ENCODE measurements at regions of chr11 and their contacts with region 1.

Region 1: GRCh38 chr11:118791111-118791965 is at the start of gene DDX6:
- DNase-seq: peak; percentile 83 to 95 (median 90)
- ATAC-seq: peak; percentile 65 to 71
- H3K4me3 Mint-ChIP-seq: peak within 1 kb of the TSS; percentile 98 to 100 (median 100)
- H3K27ac Mint-ChIP-seq: peak within 1 kb of the TSS; percentile 96 to 100 (median 100)
- H3K4me1 Mint-ChIP-seq: peaks cover 15 to 50% (median 25%) of the 10 kb centered on the region in 4 donors
- H3K27me3 Mint-ChIP-seq: no peaks in the 10 kb centered on the region
- polyA plus RNA-seq, gene DDX6: 82.7 to 107 (median 106) TPM

Region 2: DNA sequence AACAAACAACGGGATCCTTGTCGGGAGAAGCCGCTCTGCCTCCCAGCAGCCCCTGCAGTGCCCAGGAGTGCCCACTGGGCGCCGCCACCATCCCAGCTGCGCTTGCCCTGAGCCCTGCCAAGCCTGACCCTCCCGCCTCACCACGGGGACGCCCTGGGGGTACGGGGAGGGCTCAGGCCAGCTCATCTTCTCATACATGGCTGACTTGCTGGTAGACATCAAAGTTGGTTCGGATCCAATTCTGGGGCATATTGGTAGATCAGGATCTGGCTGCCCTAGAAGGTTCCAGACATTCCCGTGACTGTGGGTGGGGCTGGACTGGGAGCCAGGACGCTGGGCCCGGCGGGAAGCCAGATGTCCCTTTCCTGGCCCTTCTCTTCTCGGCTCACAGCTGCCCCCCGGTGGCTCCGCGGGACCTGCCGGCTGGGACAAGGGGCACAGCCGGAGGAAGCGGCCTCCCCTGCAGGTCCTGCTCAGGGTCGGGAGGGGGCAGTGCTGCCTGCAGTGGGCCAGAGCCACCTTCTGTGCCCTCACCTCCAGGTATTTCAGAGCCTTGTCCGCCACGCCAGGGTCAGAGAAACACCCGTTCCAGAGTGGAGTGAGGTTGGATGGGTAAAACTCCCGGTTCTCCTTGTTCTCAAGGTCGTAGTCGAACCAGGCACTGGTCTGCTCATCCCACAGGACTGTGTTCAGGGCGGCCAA is 101.3 kb before region 1 on chr11:
- POLR2A ChIA-PET with region 1: interaction called, 277 read pairs
- DNase-seq: peak; percentile 71 to 91 (median 81)
- ATAC-seq: peak; percentile 87 to 94
- H3K4me3 Mint-ChIP-seq: peak overlapping the region; percentile 50 to 82 (median 76)
- H3K27ac Mint-ChIP-seq: peak overlapping the region; percentile 22 to 97 (median 77)
- H3K4me1 Mint-ChIP-seq: peaks cover 29 to 70% (median 51%) of the 10 kb centered on the region in 4 donors
- H3K27me3 Mint-ChIP-seq: no peaks in the 10 kb centered on the region

Region 3: GRCh38 chr11:118766035-118766434 is 25.3 kb before region 1 on chr11:
- POLR2A ChIA-PET with region 1: interaction called, 19 read pairs
- DNase-seq: no peak
- ATAC-seq: no peak
- H3K4me3 Mint-ChIP-seq: no peak overlapping the region
- H3K27ac Mint-ChIP-seq: peak overlapping the region in 4 of 10 donors; percentile 3 to 63 (median 46)
- H3K4me1 Mint-ChIP-seq: peaks cover 15 to 62% (median 50%) of the 10 kb centered on the region in 4 donors
- H3K27me3 Mint-ChIP-seq: no peaks in the 10 kb centered on the region

Region 4: GRCh38 chr11:118807800-118808778 is 16.8 kb after region 1 on chr11:
- POLR2A ChIA-PET with region 1: interaction called, 55 read pairs
- DNase-seq: peak in 1 of 10 donors; percentile 23
- ATAC-seq: peak; percentile 56 to 72
- H3K4me3 Mint-ChIP-seq: peak overlapping the region in 9 of 10 donors; percentile 24 to 67 (median 48)
- H3K27ac Mint-ChIP-seq: peak overlapping the region in 9 of 10 donors; percentile 19 to 92 (median 76)
- H3K4me1 Mint-ChIP-seq: peaks cover 12 to 47% (median 20%) of the 10 kb centered on the region in 4 donors
- H3K27me3 Mint-ChIP-seq: no peaks in the 10 kb centered on the region

Region 5: DNA sequence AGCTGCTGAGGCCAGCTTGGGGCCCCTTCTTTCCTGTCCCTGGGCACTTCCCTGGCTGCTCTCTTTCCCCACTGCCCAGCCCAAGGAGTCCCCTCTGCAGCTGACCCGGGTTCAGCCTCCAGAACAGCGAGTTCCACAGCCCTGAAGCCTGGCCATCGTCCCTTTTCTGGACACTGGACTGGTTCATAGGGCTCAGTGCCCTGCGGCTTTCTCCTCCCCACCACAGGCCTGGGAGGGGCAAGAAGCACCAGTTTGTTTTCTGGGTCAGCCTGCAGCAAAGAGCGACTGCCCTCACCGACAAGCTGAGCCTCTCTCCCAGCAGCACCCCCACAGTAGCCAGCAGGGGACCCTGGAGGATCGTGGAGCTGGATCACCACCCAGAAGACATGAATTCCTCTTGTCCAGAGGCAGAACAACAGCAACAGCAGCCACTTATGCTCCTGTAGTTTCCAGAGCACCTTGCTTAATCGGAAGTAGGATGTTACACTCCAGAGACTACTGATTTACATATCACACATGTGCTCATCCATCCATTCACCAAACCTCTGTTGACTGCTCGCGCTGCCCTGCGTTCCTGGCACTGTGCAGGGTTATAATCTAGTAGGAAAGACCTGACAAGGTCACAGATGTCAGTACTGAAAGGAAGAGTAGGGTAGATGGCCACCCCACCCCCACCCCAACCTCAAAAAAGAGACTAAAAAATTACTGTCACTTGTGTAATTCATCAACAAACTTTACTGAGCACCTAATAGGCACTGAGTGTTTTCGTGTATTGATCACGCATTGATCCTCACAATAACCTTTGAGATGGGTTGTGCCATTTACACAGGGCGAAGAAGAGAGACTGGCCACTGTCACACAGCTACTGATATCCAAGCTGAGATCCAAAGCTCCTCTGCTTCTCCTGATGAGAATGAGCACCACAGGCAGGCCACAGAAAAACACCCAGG is 79.3 kb after region 1 on chr11:
- POLR2A ChIA-PET with region 1: interaction called, 503 read pairs
- DNase-seq: peak in 3 of 10 donors; percentile 14 to 20 (median 17)
- ATAC-seq: peak; percentile 37 to 39
- H3K4me3 Mint-ChIP-seq: peak overlapping the region; percentile 73 to 90 (median 84)
- H3K27ac Mint-ChIP-seq: peak overlapping the region; percentile 97 to 100 (median 99)
- H3K4me1 Mint-ChIP-seq: peaks cover 33 to 66% (median 57%) of the 10 kb centered on the region in 4 donors
- H3K27me3 Mint-ChIP-seq: no peaks in the 10 kb centered on the region

Region 6: DNA sequence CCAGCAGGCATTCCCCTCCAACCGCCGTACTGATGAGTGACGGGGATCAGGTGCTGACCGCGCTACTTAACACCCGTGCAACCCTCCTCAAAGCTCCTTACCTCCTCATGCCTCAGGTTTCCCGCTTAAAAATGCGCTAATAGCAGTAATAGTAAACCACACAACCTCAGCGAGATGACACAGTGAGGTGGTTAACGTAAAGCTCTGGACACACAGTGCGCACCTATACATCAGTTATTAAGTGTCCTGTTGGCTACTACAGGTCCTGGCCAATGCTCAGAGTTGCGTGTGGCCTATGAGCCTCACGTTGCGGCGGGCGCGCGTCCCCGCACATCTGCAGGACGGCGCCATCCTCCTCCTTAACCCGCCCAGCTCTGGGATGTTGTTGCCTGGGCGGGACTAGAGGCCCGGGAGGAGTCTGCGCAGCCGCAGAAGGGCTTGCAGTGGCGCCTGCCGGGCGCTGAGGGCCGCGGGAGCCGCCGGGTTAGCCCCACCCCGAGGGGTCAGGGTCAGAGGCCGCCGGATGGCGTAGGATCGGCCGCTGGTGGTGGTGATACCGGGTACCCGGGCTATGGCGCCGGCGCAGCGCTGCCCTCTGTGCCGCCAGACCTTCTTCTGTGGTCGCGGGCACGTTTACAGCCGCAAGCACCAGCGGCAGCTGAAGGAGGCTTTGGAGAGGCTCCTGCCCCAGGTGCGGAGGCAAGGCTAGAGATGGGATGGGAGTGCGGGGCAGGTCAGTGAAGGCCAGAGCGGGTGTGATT is 206.5 kb after region 1 on chr11 and contains the start of gene CENATAC:
- POLR2A ChIA-PET with region 1: interaction called, 12 read pairs
- DNase-seq: peak; percentile 90 to 96 (median 94)
- ATAC-seq: peak; percentile 93
- H3K4me3 Mint-ChIP-seq: peak within 1 kb of the TSS; percentile 88 to 99 (median 98)
- H3K27ac Mint-ChIP-seq: peak within 1 kb of the TSS; percentile 89 to 99 (median 97)
- H3K4me1 Mint-ChIP-seq: peaks cover 13 to 48% (median 45%) of the 10 kb centered on the region in 4 donors
- H3K27me3 Mint-ChIP-seq: no peaks in the 10 kb centered on the region
- polyA plus RNA-seq, gene CENATAC: 6.1 to 9.1 (median 8.7) TPM

Measured in naive thymus-derived CD8-positive, alpha-beta T cell (primary cell).